ENCODE measurements at regions of chr19 and their contacts with region 1.

Region 1: DNA sequence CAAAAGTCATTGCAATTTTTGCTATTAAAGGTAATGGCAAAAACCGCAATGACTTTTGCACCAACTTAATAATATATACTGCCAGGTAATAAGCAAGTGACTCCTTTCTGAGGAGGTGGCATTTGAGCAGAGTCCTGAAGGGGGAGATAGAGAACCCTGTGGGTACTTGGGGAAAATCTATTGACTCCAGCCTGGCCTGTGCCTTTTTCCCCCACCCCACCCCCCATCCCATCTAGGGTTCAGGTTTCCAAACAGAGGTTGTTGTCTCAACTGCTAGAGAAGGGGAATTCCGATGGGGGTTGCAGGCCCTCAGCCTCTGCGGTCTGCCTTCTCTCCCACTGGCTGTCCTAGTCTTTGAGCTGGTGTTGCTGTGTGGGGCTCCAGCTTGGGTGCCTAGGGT is 11.5 kb downstream of the S1PR2 start:
- DNase-seq: peak in 3 of 9 donors; percentile 17 to 33 (median 17)
- ATAC-seq: peak; percentile 81
- H3K4me3 ChIP-seq: no peak overlapping the region
- H3K4me3 Mint-ChIP-seq: no peak overlapping the region
- H3K27ac ChIP-seq: no peak overlapping the region
- H3K27ac Mint-ChIP-seq: no peak overlapping the region
- H3K4me1 ChIP-seq: no peaks in the 10 kb centered on the region
- H3K4me1 Mint-ChIP-seq: peaks cover 0 to 8% (median 3%) of the 10 kb centered on the region in 7 donors
- H3K27me3 ChIP-seq: no peaks in the 10 kb centered on the region
- H3K27me3 Mint-ChIP-seq: no peaks in the 10 kb centered on the region

Region 2: DNA sequence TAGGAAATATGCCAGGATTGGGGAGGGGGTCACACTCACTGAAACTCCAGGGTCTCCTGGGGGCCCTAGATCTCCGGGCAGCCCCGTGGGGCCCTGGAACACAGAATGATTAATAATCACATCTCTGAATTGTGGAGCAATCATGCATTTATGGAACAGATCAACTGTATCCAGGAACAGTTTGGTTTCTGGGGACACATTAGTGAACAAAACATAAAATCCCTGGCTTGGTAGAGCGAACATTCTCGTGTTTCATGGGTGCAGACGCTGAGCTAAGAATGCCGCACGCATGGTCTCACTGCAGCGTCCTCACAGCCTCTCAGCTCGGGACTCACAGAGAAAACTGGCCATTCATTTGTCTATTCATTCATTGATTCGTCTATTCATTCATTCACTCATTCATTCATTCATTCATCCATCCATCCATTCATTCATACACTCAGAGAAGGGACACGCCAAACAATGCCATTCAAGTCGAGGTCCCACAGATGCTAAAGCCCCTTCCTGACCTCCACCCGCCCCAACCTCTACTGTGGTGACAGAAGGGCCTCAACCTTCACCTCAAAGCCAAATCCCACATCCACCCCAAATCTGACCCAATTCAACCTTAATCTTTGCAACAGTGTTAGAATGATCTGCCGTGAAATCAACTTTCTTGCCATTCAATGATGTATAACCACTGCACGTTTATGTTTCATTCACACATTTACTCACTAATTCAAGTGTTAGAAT is 248.3 kb before region 1 on chr19:
- CTCF ChIA-PET with region 1: no interaction called
- POLR2A ChIA-PET with region 1: no interaction called
- intact Hi-C with region 1: no loop called
- DNase-seq: no peak
- ATAC-seq: no peak
- H3K4me3 ChIP-seq: no peak overlapping the region
- H3K4me3 Mint-ChIP-seq: no peak overlapping the region
- H3K27ac ChIP-seq: no peak overlapping the region
- H3K27ac Mint-ChIP-seq: no peak overlapping the region
- H3K4me1 ChIP-seq: no peaks in the 10 kb centered on the region
- H3K4me1 Mint-ChIP-seq: peaks cover 0 to 15% (median 4%) of the 10 kb centered on the region in 7 donors
- H3K27me3 ChIP-seq: no peaks in the 10 kb centered on the region
- H3K27me3 Mint-ChIP-seq: peaks cover 14 to 39% (median 32%) of the 10 kb centered on the region in 5 donors

Region 3: DNA sequence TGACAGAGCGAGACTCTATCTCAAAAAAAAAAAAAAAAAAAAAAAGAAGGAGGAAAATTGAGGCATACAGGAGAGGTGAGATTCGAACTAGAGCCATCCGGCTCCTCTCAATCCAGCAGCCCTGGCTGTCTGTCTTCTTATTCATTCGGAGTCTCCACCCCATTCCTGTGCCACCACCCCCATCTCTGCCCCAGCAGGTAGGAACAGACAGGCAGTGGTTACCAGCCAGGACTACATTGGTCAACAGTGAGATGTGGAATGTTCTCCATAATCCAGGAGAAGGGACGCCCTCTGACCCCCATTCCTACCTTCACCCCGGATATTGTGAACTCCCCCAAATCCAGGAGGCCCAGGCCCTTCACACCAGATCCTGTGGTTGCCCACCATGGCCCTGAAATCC is 18.0 kb after region 1 on chr19:
- CTCF ChIA-PET with region 1: interaction called, 5 read pairs
- POLR2A ChIA-PET with region 1: interaction called, 3 read pairs
- intact Hi-C with region 1: loop called in 1 of 2 experiments (anchors 2 kb)
- DNase-seq: no peak
- ATAC-seq: no peak
- H3K4me3 ChIP-seq: no peak overlapping the region
- H3K4me3 Mint-ChIP-seq: peak overlapping the region in 2 of 10 donors; percentile 13 to 29
- H3K27ac ChIP-seq: no peak overlapping the region
- H3K27ac Mint-ChIP-seq: peak overlapping the region in 1 of 9 donors; percentile 34
- H3K4me1 ChIP-seq: peaks cover 10 to 14% of the 10 kb centered on the region in 2 donors
- H3K4me1 Mint-ChIP-seq: peaks cover 6 to 27% (median 17%) of the 10 kb centered on the region in 7 donors
- H3K27me3 ChIP-seq: no peaks in the 10 kb centered on the region
- H3K27me3 Mint-ChIP-seq: no peaks in the 10 kb centered on the region

Region 4: DNA sequence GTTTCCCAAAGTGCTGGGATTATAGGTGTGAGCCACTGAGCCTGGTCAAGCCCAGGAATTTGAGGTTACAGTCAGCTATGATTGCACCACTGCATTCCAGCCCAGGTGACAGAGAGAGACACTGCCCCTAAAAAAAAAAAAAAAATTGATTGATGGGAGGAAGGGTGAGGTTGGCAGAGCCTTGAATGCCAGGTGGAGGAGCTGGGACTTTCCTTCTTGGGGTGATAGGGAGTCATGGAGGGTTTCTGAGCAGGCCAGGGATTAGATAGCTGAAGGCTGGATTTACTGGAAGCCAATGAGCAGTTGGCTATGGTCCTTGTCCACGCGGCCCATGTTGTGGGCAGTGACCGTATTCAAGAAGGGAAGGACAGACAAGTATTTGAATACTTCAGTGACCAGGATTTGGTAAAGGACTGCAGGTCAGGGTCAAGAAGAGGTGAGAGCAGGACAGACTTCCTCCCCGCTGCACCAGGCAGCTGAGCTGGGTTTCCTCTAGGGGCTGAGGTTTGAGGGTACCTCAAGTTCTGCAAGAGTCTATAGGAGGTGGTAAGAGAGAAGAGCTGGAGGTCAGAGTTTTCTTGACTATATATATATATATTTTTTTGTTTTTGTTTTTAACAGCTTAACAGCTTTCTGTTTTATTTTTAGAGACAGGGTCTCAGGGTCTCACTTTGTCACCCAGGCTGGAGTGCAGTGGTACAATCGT is 60.2 kb after region 1 on chr19:
- CTCF ChIA-PET with region 1: no interaction called
- POLR2A ChIA-PET with region 1: no interaction called
- intact Hi-C with region 1: no loop called
- DNase-seq: no peak
- ATAC-seq: no peak
- H3K4me3 ChIP-seq: no peak overlapping the region
- H3K4me3 Mint-ChIP-seq: no peak overlapping the region
- H3K27ac ChIP-seq: no peak overlapping the region
- H3K27ac Mint-ChIP-seq: peak overlapping the region in 4 of 9 donors; percentile 3 to 86 (median 32)
- H3K4me1 ChIP-seq: peaks cover 0 to 3% of the 10 kb centered on the region in 2 donors
- H3K4me1 Mint-ChIP-seq: peaks cover 4 to 28% (median 8%) of the 10 kb centered on the region in 7 donors
- H3K27me3 ChIP-seq: no peaks in the 10 kb centered on the region
- H3K27me3 Mint-ChIP-seq: no peaks in the 10 kb centered on the region

Measured in naive thymus-derived CD4-positive, alpha-beta T cell (primary cell).